ENCODE measurements at regions of chr11 and their contacts with region 1.

Region 1: DNA sequence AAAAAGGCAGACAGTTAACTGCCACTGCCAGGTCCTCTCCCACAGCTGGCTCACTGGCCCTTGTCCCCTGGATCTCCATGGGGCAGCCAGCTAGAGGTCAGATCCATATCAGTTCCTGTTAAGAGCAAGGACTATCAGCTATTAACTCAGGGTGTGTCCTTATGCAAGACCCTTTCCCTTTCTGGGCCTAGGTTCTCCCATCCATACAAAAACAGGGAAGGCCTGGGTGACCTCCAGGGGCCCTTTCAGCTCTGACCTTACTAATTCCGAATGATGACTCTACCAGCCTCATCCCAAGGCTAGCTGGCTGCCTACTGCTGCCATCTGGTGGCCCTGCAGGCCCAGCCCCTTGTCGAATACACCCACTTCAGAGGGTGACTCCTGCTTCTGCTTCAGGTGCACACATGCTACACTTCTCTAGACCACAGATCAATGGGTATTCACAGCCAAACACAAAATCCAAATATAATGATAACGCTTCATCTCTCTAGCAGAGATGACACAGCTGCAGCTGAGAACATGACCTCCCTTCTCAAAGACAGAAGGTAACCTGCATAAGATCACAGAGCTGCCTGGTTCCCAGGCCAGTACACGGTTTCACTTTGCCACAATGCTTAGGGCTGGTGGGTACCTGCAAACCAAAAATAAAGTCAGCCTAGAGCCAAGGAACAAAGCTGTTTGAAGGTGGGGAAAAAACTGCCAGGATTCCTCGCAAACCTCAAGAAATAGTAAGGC is 34.1 kb downstream of the SERGEF start:
- DNase-seq: peak; percentile 57
- ATAC-seq: no peak
- H3K4me3 Mint-ChIP-seq: no peak overlapping the region
- H3K27ac Mint-ChIP-seq: no peak overlapping the region
- H3K4me1 Mint-ChIP-seq: no peaks in the 10 kb centered on the region
- H3K27me3 Mint-ChIP-seq: no peaks in the 10 kb centered on the region

Region 2: DNA sequence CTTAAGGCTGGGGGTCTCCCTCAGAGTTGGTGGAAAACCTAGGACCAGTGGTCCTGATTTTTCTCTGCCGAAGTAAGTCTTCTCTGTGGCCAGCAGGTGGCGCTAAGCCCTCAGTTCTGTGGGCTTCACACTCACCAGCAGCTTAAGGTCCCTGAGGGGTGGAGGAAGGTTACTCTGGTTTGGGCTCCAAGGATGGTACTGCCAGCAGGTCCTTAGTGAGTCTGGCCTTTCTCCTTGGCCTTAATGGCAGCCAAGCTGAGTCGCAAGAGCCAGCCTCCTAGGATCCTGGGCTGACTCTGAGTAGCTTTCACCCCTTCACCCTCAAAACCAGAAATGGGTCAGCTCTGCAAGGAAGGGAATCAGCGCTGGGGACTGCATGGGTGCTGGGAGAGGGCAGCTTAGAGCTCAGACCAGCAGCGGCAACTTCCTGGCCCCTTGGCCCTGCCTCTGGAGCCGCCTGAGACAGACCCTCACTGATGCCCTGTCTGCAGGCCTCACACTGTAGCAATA is 594.7 kb before region 1 on chr11:
- CTCF ChIA-PET with region 1: interaction called, 3 read pairs
- POLR2A ChIA-PET with region 1: no interaction called
- intact Hi-C with region 1: loop called in 1 of 2 experiments (anchors 10 kb)
- DNase-seq: peak; percentile 90
- ATAC-seq: peak; percentile 64
- H3K4me3 Mint-ChIP-seq: no peak overlapping the region
- H3K27ac Mint-ChIP-seq: no peak overlapping the region
- H3K4me1 Mint-ChIP-seq: no peaks in the 10 kb centered on the region
- H3K27me3 Mint-ChIP-seq: peaks cover 8% of the 10 kb centered on the region

Region 3: DNA sequence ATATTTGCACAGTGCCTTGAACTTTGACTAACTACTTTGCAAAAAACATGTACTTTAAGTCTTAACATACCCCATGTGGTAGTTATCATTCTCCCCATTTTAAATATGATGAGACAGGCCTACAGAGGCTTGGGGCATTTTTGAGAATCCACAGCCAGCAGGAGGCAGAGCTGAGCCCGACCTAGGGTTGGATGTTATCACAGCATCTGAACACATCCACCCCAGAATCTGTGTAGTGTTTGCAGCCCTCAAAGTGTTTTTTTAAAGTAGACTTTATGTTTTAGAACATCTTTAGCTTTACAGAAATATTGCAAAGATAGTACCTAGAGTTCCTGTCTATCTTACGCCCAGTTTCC is 414.1 kb before region 1 on chr11:
- CTCF ChIA-PET with region 1: no interaction called
- POLR2A ChIA-PET with region 1: no interaction called
- intact Hi-C with region 1: no loop called
- DNase-seq: peak; percentile 46
- ATAC-seq: no peak
- H3K4me3 Mint-ChIP-seq: no peak overlapping the region
- H3K27ac Mint-ChIP-seq: no peak overlapping the region
- H3K4me1 Mint-ChIP-seq: no peaks in the 10 kb centered on the region
- H3K27me3 Mint-ChIP-seq: no peaks in the 10 kb centered on the region

Region 4: GRCh38 chr11:17598700-17599459 is 379.8 kb before region 1 on chr11:
- CTCF ChIA-PET with region 1: interaction called, 6 read pairs
- POLR2A ChIA-PET with region 1: no interaction called
- intact Hi-C with region 1: loop called (anchors 1 to 2 kb)
- DNase-seq: peak; percentile 87
- ATAC-seq: peak; percentile 92
- H3K4me3 Mint-ChIP-seq: no peak overlapping the region
- H3K27ac Mint-ChIP-seq: no peak overlapping the region
- H3K4me1 Mint-ChIP-seq: peaks cover 5% of the 10 kb centered on the region
- H3K27me3 Mint-ChIP-seq: peaks cover 2% of the 10 kb centered on the region

Region 5: GRCh38 chr11:17730608-17731462 is 247.9 kb before region 1 on chr11:
- CTCF ChIA-PET with region 1: interaction called, 115 read pairs
- POLR2A ChIA-PET with region 1: no interaction called
- intact Hi-C with region 1: loop called (anchors 1 kb)
- DNase-seq: peak; percentile 84
- ATAC-seq: peak; percentile 88
- H3K4me3 Mint-ChIP-seq: no peak overlapping the region
- H3K27ac Mint-ChIP-seq: no peak overlapping the region
- H3K4me1 Mint-ChIP-seq: peaks cover 5% of the 10 kb centered on the region
- H3K27me3 Mint-ChIP-seq: peaks cover 36% of the 10 kb centered on the region

Region 6: GRCh38 chr11:17760102-17761029 is 218.4 kb before region 1 on chr11:
- CTCF ChIA-PET with region 1: interaction called, 4 read pairs
- POLR2A ChIA-PET with region 1: no interaction called
- intact Hi-C with region 1: loop called in 1 of 2 experiments (anchors 1 kb)
- DNase-seq: peak; percentile 62
- ATAC-seq: peak; percentile 90
- H3K4me3 Mint-ChIP-seq: no peak overlapping the region
- H3K27ac Mint-ChIP-seq: no peak overlapping the region
- H3K4me1 Mint-ChIP-seq: peaks cover 2% of the 10 kb centered on the region
- H3K27me3 Mint-ChIP-seq: peaks cover 6% of the 10 kb centered on the region

Region 7: GRCh38 chr11:17991783-17992433 is 13.2 kb after region 1 on chr11:
- CTCF ChIA-PET with region 1: interaction called, 97 read pairs
- POLR2A ChIA-PET with region 1: no interaction called
- intact Hi-C with region 1: no loop called
- DNase-seq: peak; percentile 63
- ATAC-seq: peak; percentile 78
- H3K4me3 Mint-ChIP-seq: no peak overlapping the region
- H3K27ac Mint-ChIP-seq: no peak overlapping the region
- H3K4me1 Mint-ChIP-seq: no peaks in the 10 kb centered on the region
- H3K27me3 Mint-ChIP-seq: no peaks in the 10 kb centered on the region

Region 8: GRCh38 chr11:18151581-18151980 is 172.9 kb after region 1 on chr11:
- CTCF ChIA-PET with region 1: no interaction called
- POLR2A ChIA-PET with region 1: no interaction called
- intact Hi-C with region 1: no loop called
- DNase-seq: no peak
- ATAC-seq: no peak
- H3K4me3 Mint-ChIP-seq: no peak overlapping the region
- H3K27ac Mint-ChIP-seq: no peak overlapping the region
- H3K4me1 Mint-ChIP-seq: no peaks in the 10 kb centered on the region
- H3K27me3 Mint-ChIP-seq: peaks cover 24% of the 10 kb centered on the region

Measured in activated CD4-positive, alpha-beta T cell treated with anti-CD3 and anti-CD28 coated beads for 36 hours (primary cell).